ENCODE measurements at regions of chr19 and their contacts with region 1.

Region 1: DNA sequence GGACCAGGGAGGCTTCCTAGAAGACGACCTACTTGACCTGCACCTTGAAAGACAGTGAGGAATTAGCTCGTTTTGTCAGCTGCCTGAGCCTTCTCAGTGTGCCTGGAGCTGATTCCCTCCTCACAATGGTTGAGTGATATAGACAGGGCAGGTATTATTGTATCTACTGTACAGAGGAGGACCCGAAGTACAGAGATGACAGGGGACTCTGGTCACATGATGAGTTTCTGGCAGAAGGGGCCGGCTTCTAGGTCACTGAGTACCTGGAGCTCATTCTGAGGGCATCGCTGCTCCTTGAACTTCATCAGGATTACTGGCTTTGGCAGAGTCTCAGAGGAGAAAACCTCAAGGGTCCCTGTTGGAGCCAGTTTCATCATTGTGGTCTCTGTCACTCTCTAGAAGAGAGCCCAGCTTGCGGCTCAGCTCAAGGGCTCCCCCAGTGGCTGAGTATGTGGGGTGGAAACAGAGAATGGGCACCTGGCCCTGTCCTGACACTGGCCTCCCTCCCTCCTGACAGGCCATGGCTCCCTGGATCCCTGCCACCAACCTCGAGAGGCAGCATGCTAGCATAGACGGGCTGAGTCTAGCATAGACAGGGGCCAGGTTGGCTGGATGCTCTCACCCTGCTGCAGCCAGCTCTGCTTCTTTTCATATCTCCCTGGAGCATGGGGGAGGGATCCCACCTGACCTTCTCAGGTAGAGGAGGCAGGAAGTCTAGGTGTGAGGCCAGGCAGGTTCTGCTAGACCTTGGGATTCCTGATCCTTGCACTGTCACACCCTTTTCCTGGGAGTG is 38.7 kb downstream of the NFIX start:
- DNase-seq: peak; percentile 75 to 88 (median 81)
- ATAC-seq: peak; percentile 98
- H3K4me3 ChIP-seq: no peak overlapping the region
- H3K27ac ChIP-seq: no peak overlapping the region
- H3K4me1 ChIP-seq: peaks cover 11 to 19% of the 10 kb centered on the region in 2 experiments; a peak in 3 of 5 replicates
- H3K27me3 ChIP-seq: no peaks in the 10 kb centered on the region
- CTCF ChIP-seq: peak; percentile 84 to 93 (median 88)
- EP300 ChIP-seq: no peak
- POLR2A ChIP-seq: no peak
- RAD21 ChIP-seq: peak; percentile 32 to 72; a peak in 3 of 4 replicates

Region 2: GRCh38 chr19:12933287-12934072 is 100.5 kb before region 1 on chr19 and contains the start of gene FARSA:
- CTCF ChIA-PET with region 1: no interaction called
- POLR2A ChIA-PET with region 1: no interaction called
- in situ Hi-C with region 1: no loop called
- intact Hi-C with region 1: no loop called
- DNase-seq: peak; percentile 82 to 96 (median 86)
- ATAC-seq: peak; percentile 85
- H3K4me3 ChIP-seq: peak within 1 kb of the TSS; percentile 86
- H3K27ac ChIP-seq: peak within 1 kb of the TSS; percentile 96
- H3K4me1 ChIP-seq: peaks cover 29 to 46% of the 10 kb centered on the region in 2 experiments
- H3K27me3 ChIP-seq: no peaks in the 10 kb centered on the region
- CTCF ChIP-seq: peak in 1 of 3 experiments; percentile 28; a peak in 2 of 6 replicates
- EP300 ChIP-seq: no peak
- POLR2A ChIP-seq: peak; percentile 96
- RAD21 ChIP-seq: no peak
- polyA plus RNA-seq, gene FARSA: 32.6 to 40.0 TPM

Region 3: GRCh38 chr19:13093407-13094105 is 59.5 kb after region 1 on chr19:
- CTCF ChIA-PET with region 1: interaction called, 3 read pairs
- POLR2A ChIA-PET with region 1: no interaction called
- in situ Hi-C with region 1: no loop called
- intact Hi-C with region 1: loop called (anchors 5 kb)
- DNase-seq: peak; percentile 83 to 92 (median 87)
- ATAC-seq: peak; percentile 57
- H3K4me3 ChIP-seq: no peak overlapping the region
- H3K27ac ChIP-seq: peak overlapping the region; percentile 10; the same call in 1 of the 3 replicates
- H3K4me1 ChIP-seq: peaks cover 36 to 84% of the 10 kb centered on the region in 2 experiments
- H3K27me3 ChIP-seq: no peaks in the 10 kb centered on the region
- CTCF ChIP-seq: peak; percentile 94 to 96 (median 95)
- EP300 ChIP-seq: no peak
- POLR2A ChIP-seq: no peak
- RAD21 ChIP-seq: peak; percentile 97 to 98

Measured in K562 (cell line).